ENCODE measurements at regions of chr1 and their contacts with region 1.

Region 1: DNA sequence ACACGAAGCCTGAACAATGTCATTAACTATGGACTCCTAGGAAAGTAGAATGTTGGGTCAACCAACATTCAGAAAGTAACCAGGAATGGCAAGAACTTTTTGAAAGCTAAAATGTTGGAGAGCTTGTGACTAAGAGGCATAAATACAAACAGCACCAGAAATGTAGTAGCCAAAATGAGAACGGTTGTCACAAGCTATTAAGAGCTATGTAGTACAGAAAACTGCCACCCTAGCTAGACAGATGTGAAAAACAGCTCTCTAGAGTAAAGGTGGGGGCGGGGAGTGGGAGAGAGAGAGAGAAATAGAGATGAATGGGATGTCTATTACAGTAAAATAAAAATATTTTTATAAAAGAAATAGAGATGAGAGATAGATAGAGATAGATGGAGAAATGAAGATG is 35.1 kb downstream of the SLC44A5 start:
- DNase-seq: no peak
- ATAC-seq: no peak
- H3K4me3 ChIP-seq: no peak overlapping the region
- H3K27ac ChIP-seq: no peak overlapping the region
- H3K4me1 ChIP-seq: no peaks in the 10 kb centered on the region
- H3K27me3 ChIP-seq: no peaks in the 10 kb centered on the region
- CTCF ChIP-seq: no peak

Region 2: GRCh38 chr1:76269155-76269554 is 693.3 kb after region 1 on chr1:
- CTCF ChIA-PET with region 1: no interaction called
- POLR2A ChIA-PET with region 1: interaction called, 13 read pairs
- in situ Hi-C with region 1: no loop called
- intact Hi-C with region 1: no loop called
- DNase-seq: no peak
- ATAC-seq: no peak
- H3K4me3 ChIP-seq: no peak overlapping the region
- H3K27ac ChIP-seq: no peak overlapping the region
- H3K4me1 ChIP-seq: no peaks in the 10 kb centered on the region
- H3K27me3 ChIP-seq: no peaks in the 10 kb centered on the region
- CTCF ChIP-seq: no peak

Measured in Panc1 (cell line).